Sciatic nerve (tissue), 2 donors: ENCODE measurements at regions of chr14 and their contacts with region 1.

Region 1: DNA sequence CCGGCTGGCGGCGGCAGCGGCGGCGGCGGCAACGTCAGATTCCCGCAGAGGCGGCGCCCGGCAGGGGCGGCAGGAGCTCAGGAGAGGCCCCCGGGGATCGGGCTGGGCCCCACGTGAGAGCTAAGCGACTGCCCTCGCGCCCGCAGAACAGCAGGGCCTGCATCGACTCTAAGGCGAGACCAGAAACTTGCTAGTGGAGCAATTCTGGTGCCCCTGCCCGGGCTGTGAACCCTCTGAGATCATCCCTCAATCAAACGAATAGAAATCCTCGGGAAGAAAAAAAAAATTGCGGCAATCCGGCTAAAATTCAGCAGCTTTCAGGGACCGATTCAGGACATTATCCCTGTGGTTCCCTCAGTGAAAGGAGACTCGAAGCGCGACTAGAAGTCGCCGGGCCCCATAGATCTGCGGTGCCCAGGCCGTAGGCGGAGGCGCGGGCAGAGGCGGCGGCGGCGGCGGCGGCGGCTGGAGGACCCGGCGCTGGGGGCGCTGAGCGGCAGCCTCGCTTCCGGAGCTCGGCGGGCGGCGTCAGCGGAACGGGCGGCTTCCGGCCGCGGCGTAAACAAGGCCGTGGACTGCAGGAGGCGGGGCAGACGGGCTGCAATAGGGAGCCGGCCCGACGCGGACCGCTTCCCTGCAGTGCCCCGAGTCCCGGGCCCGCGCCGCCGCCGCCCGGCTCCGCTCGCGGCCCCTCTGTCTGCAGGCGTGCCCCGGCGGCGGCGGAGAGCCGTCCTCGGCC is at the start of gene KLHDC2:
- DNase-seq: peak; percentile 93
- ATAC-seq: peak; percentile 93
- total RNA-seq, gene KLHDC2: 58.9 TPM

Region 2: DNA sequence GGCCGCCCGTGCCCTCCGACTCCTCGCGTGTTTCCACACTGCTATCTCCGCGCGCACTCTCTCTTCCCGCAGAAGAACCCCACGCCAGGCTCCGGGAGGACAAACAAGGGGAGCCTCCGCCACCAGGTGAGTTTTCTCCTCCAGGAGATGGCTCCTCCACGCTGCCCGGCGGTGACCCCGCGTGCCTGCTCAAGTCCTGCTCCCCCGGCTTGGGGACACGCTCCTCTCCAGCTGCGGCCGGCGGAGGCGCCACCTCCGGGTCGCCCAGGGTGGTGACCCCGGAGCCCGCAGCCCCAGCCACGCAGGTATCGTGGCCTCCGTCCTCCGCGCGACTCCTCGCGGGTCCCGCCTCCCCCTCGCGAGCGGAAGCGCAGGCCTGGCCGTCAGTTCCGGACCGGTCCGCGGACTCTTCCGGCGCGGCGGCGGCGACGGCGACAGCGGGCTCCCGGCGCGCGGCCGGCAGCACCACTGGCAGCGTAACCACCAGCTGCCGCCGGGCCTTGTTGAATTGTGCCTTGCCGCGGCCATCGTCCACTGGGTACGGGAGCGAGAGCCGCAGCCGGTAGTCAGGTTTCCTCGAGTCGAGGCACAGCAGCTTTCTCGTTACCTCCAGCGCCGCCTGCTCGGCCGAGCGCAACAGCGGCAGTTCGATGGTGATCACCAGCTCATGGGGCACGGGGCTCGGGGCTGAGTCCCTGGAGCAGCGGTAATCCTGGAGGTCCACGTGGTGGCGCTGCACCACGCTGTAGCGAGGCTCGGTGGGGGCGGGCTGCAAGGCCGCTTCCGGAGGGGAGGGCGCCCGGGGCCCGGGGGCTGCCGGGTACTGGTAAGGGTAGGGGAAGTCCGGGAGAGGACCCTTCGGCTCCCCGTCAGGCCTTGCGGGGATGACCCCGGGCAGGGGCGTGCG is 133.8 kb before region 1 on chr14:
- intact Hi-C with region 1: loop called (anchors 5 kb)
- DNase-seq: peak; percentile 96
- ATAC-seq: peak; percentile 95

Region 3: DNA sequence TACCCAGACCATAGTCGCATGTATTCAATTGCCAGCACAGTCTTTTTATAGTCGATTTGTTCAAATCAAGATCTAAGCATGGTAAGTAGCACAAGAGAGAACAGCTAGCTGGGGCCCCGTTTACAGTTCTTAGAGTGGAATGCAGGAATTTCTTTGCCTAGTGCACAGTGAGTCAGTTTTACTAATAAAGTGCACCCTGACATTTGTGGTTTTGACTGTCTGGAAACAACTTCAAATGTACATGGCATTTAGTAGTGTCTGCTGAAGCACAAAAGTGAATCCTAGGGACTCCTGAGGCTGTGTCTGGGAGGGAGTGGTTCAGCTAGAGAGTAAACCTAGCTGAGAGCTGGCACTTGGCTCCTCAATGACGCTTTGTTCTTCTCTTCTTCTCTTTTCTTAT is 1537.2 kb after region 1 on chr14:
- intact Hi-C with region 1: no loop called
- DNase-seq: no peak
- ATAC-seq: peak; percentile 45